Panc1 (cell line): ENCODE measurements at regions of chr4 and their contacts with region 1.

Region 1: GRCh38 chr4:5133201-5133600 is 81.9 kb downstream of the STK32B start:
- DNase-seq: no peak
- ATAC-seq: no peak
- H3K4me3 ChIP-seq: no peak overlapping the region
- H3K27ac ChIP-seq: no peak overlapping the region
- H3K4me1 ChIP-seq: no peaks in the 10 kb centered on the region
- H3K27me3 ChIP-seq: no peaks in the 10 kb centered on the region
- CTCF ChIP-seq: no peak

Region 2: GRCh38 chr4:4575273-4576211 is 557.7 kb before region 1 on chr4:
- CTCF ChIA-PET with region 1: no interaction called
- POLR2A ChIA-PET with region 1: no interaction called
- in situ Hi-C with region 1: no loop called
- intact Hi-C with region 1: no loop called
- DNase-seq: no peak
- ATAC-seq: peak; percentile 94
- H3K4me3 ChIP-seq: peak overlapping the region; percentile 54 to 65
- H3K27ac ChIP-seq: peak overlapping the region; percentile 70
- H3K4me1 ChIP-seq: no peaks in the 10 kb centered on the region
- H3K27me3 ChIP-seq: no peaks in the 10 kb centered on the region
- CTCF ChIP-seq: peak; percentile 46

Region 3: GRCh38 chr4:4852591-4853375 is 280.4 kb before region 1 on chr4:
- CTCF ChIA-PET with region 1: no interaction called
- POLR2A ChIA-PET with region 1: no interaction called
- in situ Hi-C with region 1: no loop called
- intact Hi-C with region 1: no loop called
- DNase-seq: no peak
- ATAC-seq: peak; percentile 64
- H3K4me3 ChIP-seq: peak overlapping the region; percentile 8 to 32; a peak in 3 of 4 replicates
- H3K27ac ChIP-seq: no peak overlapping the region
- H3K4me1 ChIP-seq: peaks cover 3% of the 10 kb centered on the region; the same call in 1 of the 2 replicates
- H3K27me3 ChIP-seq: no peaks in the 10 kb centered on the region; the same call in 1 of the 2 replicates
- CTCF ChIP-seq: no peak

Region 4: DNA sequence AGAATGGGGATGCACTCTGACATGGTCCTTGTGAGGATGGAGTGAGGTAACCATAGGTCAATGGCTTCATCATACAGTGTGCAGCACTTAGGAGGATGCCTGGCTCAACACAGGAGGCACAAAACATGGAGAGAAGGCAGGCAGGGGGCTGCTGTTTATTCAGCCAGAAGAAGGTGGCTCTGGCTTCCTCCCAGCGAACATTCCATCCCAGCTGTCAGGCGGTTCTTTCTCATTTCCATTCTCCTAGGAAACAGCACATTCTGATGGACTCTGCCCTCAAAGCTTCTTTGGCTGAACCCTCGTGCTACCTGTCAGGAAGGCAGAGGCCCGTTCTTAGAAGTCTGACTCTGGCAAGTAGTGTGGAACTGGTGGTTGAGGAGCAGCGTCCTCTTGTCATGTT is 63.3 kb before region 1 on chr4:
- CTCF ChIA-PET with region 1: no interaction called
- POLR2A ChIA-PET with region 1: no interaction called
- in situ Hi-C with region 1: no loop called
- intact Hi-C with region 1: no loop called
- DNase-seq: no peak
- ATAC-seq: no peak
- H3K4me3 ChIP-seq: no peak overlapping the region
- H3K27ac ChIP-seq: no peak overlapping the region
- H3K4me1 ChIP-seq: no peaks in the 10 kb centered on the region
- H3K27me3 ChIP-seq: no peaks in the 10 kb centered on the region
- CTCF ChIP-seq: no peak

Region 5: DNA sequence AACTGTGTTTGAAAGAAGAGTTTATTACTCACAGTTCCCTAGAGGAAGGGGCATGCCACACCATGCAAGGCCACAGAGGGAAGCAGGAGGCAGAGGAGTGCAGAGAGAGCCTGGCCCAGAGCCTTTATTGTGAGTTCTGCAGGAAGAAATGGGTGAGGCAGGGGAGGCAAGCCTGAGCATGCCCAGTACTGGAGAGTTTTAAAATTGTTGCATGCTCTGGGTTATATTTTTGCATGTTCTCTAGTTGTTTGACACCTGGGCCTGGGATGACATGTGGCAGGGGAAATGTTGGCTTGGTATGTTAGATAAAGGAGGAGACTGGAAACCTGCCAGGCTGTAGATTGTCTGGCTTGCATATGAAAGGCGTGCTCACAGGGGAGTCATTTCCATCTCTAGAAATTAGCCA is 779.4 kb after region 1 on chr4:
- CTCF ChIA-PET with region 1: no interaction called
- POLR2A ChIA-PET with region 1: interaction called, 13 read pairs
- in situ Hi-C with region 1: no loop called
- intact Hi-C with region 1: no loop called
- DNase-seq: no peak
- ATAC-seq: no peak
- H3K4me3 ChIP-seq: no peak overlapping the region
- H3K27ac ChIP-seq: no peak overlapping the region
- H3K4me1 ChIP-seq: no peaks in the 10 kb centered on the region
- H3K27me3 ChIP-seq: no peaks in the 10 kb centered on the region; the same call in 1 of the 2 replicates
- CTCF ChIP-seq: no peak